Common myeloid progenitor, CD34-positive (primary cell): ENCODE measurements at regions of chr11 and their contacts with region 1.

Region 1: GRCh38 chr11:16613512-16614381 is 124.7 kb upstream of the C11orf58 start:
- DNase-seq: peak; percentile 79 to 89 (median 88)
- H3K4me3 ChIP-seq: peak overlapping the region in 5 of 7 experiments; percentile 5 to 55 (median 28)
- H3K27ac ChIP-seq: no peak overlapping the region
- H3K4me1 ChIP-seq: peaks cover 2 to 19% (median 16%) of the 10 kb centered on the region in 4 experiments
- H3K27me3 ChIP-seq: peaks cover 40 to 92% (median 58%) of the 10 kb centered on the region in 5 experiments

Region 2: DNA sequence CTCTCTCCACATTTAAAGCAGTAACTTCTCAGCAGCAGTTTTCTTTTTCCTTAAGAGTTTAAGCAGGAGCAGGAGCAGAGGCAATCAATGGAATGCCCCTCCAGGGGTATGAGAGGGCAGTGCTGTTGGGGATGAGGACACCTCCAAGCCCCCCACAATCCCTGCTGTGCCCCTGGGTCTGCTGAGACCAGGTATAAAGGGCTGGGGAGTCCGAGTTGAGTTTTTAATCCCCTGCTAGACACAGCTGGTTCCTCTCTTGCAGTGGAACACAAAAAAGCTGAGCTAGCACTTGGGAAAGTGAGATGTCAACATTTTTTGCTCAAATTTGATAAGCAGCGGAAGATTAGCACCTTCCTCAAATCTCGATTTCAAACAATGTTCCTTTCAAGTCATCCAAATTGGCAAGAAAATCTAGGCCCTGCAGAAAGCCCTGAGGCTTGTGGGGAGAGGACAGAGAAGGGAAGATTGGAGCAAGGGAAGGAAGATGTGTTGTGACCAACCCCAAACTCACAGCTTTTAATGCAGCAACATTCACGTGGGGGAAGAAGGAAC is 839.3 kb before region 1 on chr11:
- CTCF ChIA-PET with region 1: interaction called, 10 read pairs
- POLR2A ChIA-PET with region 1: no interaction called
- DNase-seq: no peak
- H3K4me3 ChIP-seq: no peak overlapping the region
- H3K27ac ChIP-seq: no peak overlapping the region
- H3K4me1 ChIP-seq: no peaks in the 10 kb centered on the region
- H3K27me3 ChIP-seq: peaks cover 0 to 7% (median 3%) of the 10 kb centered on the region in 5 experiments

Region 3: GRCh38 chr11:16191212-16191867 is 422.4 kb before region 1 on chr11:
- CTCF ChIA-PET with region 1: interaction called, 11 read pairs
- POLR2A ChIA-PET with region 1: no interaction called
- DNase-seq: peak; percentile 36 to 78 (median 72)
- H3K4me3 ChIP-seq: no peak overlapping the region
- H3K27ac ChIP-seq: no peak overlapping the region
- H3K4me1 ChIP-seq: peaks cover 0 to 11% (median 6%) of the 10 kb centered on the region in 4 experiments
- H3K27me3 ChIP-seq: peaks cover 0 to 1% (median 0%) of the 10 kb centered on the region in 5 experiments

Region 4: DNA sequence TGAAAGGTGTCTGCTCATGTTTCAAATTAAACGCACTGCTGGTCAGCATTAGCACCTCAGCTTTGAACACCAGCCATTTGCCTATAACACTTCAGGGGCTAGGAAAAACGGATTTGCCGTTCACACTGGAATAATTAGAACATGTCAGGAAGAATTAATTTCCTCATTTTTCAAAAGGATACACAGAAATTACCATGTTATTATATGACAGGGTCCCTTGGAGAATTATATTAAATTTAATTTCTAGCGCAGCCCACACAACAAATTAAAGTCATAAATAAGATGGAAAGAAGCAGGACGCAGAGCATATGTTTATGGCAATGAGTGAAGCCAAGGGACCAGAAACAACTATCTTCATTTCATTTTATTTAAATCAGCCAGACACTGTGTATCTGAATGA is 173.6 kb before region 1 on chr11:
- CTCF ChIA-PET with region 1: no interaction called
- POLR2A ChIA-PET with region 1: no interaction called
- DNase-seq: no peak
- H3K4me3 ChIP-seq: no peak overlapping the region
- H3K27ac ChIP-seq: no peak overlapping the region
- H3K4me1 ChIP-seq: peaks cover 0 to 4% (median 0%) of the 10 kb centered on the region in 4 experiments
- H3K27me3 ChIP-seq: no peaks in the 10 kb centered on the region

Region 5: DNA sequence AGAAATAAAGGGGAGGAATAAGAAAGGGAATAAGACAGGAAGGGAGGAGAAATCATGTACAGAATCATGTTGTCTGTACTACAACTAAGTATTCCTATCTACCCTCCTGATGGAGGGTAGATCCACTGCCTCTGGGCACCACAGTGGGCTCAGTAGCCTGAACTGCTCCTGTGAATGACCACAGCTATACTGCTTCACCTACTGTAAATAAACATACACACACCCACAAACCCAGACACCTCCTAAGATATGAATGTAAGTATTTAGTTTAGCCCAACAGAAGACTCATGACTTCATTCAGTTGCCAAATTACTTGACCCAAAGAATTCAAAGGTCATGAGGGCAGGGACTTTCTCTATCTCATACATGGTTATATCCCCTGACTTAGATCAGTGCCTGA is 52.6 kb before region 1 on chr11:
- CTCF ChIA-PET with region 1: no interaction called
- POLR2A ChIA-PET with region 1: no interaction called
- DNase-seq: no peak
- H3K4me3 ChIP-seq: no peak overlapping the region
- H3K27ac ChIP-seq: no peak overlapping the region
- H3K4me1 ChIP-seq: no peaks in the 10 kb centered on the region
- H3K27me3 ChIP-seq: no peaks in the 10 kb centered on the region